ENCODE measurements at regions of chr16 and their contacts with region 1.

Region 1: GRCh38 chr16:53509906-53510703 is 7.1 kb upstream of the AKTIP start:
- DNase-seq: peak; percentile 74 to 79
- H3K4me3 ChIP-seq: no peak overlapping the region
- H3K4me3 Mint-ChIP-seq: no peak overlapping the region
- H3K27ac Mint-ChIP-seq: peak overlapping the region; percentile 87
- H3K4me1 ChIP-seq: peaks cover 31% of the 10 kb centered on the region
- H3K4me1 Mint-ChIP-seq: peaks cover 23% of the 10 kb centered on the region
- H3K27me3 ChIP-seq: no peaks in the 10 kb centered on the region
- H3K27me3 Mint-ChIP-seq: no peaks in the 10 kb centered on the region
- CTCF ChIP-seq: peak; percentile 94 to 97

Region 2: DNA sequence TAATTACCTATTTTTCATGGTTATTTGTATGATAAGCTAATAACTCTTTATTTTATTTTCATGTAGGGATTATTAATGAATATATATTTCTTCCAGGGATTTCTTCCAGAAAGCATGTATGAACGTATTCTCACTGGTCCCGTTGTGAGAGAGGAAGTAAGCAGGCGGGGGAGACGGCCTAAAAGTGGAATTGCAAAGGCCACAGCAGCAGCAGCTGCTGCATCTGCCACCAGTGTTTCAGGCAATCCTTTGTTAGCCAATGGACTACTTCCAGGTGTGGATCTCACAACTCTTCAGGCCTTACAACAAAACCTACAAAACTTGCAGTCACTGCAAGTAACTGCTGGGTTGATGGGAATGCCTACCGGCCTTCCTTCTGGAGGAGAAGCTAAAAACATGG is 186.2 kb before region 1 on chr16:
- CTCF ChIA-PET with region 1: no interaction called
- POLR2A ChIA-PET with region 1: no interaction called
- intact Hi-C with region 1: loop called (anchors 5 kb)
- DNase-seq: no peak
- H3K4me3 ChIP-seq: no peak overlapping the region
- H3K4me3 Mint-ChIP-seq: no peak overlapping the region
- H3K27ac Mint-ChIP-seq: no peak overlapping the region
- H3K4me1 ChIP-seq: no peaks in the 10 kb centered on the region
- H3K4me1 Mint-ChIP-seq: no peaks in the 10 kb centered on the region
- H3K27me3 ChIP-seq: no peaks in the 10 kb centered on the region
- H3K27me3 Mint-ChIP-seq: no peaks in the 10 kb centered on the region
- CTCF ChIP-seq: no peak

Region 3: DNA sequence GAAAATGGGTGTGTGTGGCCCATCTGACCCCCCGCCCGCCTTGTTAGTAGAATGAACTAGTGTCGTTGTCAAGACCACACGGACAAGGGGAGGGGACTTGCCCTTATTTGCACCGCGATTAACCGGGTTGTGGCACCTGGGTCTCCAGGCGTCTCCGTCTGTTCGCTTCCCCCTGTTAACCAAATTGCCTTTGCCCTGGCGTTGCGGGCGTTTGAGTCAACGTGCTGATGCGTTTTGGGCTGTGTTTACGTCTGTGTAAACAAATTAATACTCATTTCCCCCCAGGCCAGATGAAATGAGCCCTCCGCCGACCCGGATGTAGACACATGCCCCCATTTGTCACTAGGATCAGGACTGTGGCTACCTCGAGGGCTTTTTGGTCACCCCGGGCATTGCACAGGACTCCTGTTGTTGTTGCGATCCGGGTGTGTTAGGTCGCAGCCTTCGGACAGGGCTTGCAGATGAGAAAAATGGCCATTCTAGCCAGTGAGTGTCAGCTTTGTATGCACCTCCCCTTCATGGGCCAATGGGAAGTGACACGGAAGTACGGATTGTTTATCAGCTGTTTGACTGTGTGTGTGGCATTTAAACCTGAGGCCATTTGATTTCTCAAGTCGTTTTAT is 74.9 kb before region 1 on chr16:
- CTCF ChIA-PET with region 1: interaction called, 3 read pairs
- POLR2A ChIA-PET with region 1: no interaction called
- intact Hi-C with region 1: loop called (anchors 2 kb)
- DNase-seq: peak; percentile 85 to 88
- H3K4me3 ChIP-seq: peak overlapping the region; percentile 99
- H3K4me3 Mint-ChIP-seq: peak overlapping the region; percentile 99
- H3K27ac Mint-ChIP-seq: peak overlapping the region; percentile 96
- H3K4me1 ChIP-seq: peaks cover 17% of the 10 kb centered on the region
- H3K4me1 Mint-ChIP-seq: peaks cover 18% of the 10 kb centered on the region
- H3K27me3 ChIP-seq: no peaks in the 10 kb centered on the region
- H3K27me3 Mint-ChIP-seq: no peaks in the 10 kb centered on the region
- CTCF ChIP-seq: no peak

Region 4: DNA sequence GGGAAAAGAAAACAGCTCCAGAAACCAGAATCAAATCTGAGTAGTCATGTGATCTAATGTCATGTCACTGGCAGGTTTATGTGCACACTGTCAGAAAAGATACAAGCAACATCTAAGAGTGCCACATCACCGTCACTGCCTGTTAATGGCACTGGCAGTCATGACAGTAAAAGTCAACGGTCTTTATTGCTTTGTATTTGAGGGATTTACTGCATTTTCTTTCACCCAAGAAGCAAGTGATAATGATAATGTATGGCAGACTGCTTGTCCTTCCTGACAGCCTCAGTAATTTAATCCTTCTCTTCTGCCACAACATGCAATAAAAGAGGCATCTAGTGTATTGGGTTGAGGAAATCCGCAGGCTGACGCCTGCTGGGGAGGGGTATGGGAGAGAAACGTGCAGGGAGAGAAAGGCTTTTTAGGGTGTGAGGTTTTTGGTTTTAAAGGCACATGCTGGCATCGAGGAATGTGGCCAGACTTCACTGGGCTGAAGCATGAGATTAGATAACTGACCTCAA is 101.1 kb after region 1 on chr16:
- CTCF ChIA-PET with region 1: interaction called, 3 read pairs
- POLR2A ChIA-PET with region 1: no interaction called
- intact Hi-C with region 1: loop called (anchors 1 kb)
- DNase-seq: peak in 1 of 2 experiments; percentile 29
- H3K4me3 ChIP-seq: no peak overlapping the region
- H3K4me3 Mint-ChIP-seq: peak overlapping the region; percentile 54
- H3K27ac Mint-ChIP-seq: peak overlapping the region; percentile 59
- H3K4me1 ChIP-seq: peaks cover 69% of the 10 kb centered on the region
- H3K4me1 Mint-ChIP-seq: peaks cover 52% of the 10 kb centered on the region
- H3K27me3 ChIP-seq: no peaks in the 10 kb centered on the region
- H3K27me3 Mint-ChIP-seq: no peaks in the 10 kb centered on the region
- CTCF ChIP-seq: no peak

Measured in Caco-2 (cell line).